PC-9 (cell line): ENCODE measurements at regions of chr1 and their contacts with region 1.

Region 1: GRCh38 chr1:93172778-93173177 is 7.4 kb downstream of the TMED5 start:
- DNase-seq: no peak
- H3K4me3 ChIP-seq: no peak overlapping the region
- H3K27ac ChIP-seq: no peak overlapping the region
- H3K4me1 ChIP-seq: peaks cover 18% of the 10 kb centered on the region
- H3K27me3 ChIP-seq: no peaks in the 10 kb centered on the region
- CTCF ChIP-seq: no peak

Region 2: GRCh38 chr1:93338421-93338820 is 165.6 kb after region 1 on chr1:
- CTCF ChIA-PET with region 1: no interaction called
- POLR2A ChIA-PET with region 1: no interaction called
- intact Hi-C with region 1: no loop called
- DNase-seq: peak; percentile 58 to 96
- H3K4me3 ChIP-seq: peak overlapping the region; percentile 16; the same call in 1 of the 2 replicates
- H3K27ac ChIP-seq: peak overlapping the region; percentile 83
- H3K4me1 ChIP-seq: peaks cover 42% of the 10 kb centered on the region
- H3K27me3 ChIP-seq: no peaks in the 10 kb centered on the region
- CTCF ChIP-seq: no peak

Region 3: GRCh38 chr1:93542398-93542797 is 369.6 kb after region 1 on chr1:
- CTCF ChIA-PET with region 1: interaction called, 15 read pairs
- POLR2A ChIA-PET with region 1: no interaction called
- intact Hi-C with region 1: no loop called
- DNase-seq: no peak
- H3K4me3 ChIP-seq: no peak overlapping the region
- H3K27ac ChIP-seq: no peak overlapping the region
- H3K4me1 ChIP-seq: no peaks in the 10 kb centered on the region
- H3K27me3 ChIP-seq: no peaks in the 10 kb centered on the region
- CTCF ChIP-seq: no peak